OCI-LY7 (cell line): ENCODE measurements at regions of chr4 and their contacts with region 1.

Region 1: DNA sequence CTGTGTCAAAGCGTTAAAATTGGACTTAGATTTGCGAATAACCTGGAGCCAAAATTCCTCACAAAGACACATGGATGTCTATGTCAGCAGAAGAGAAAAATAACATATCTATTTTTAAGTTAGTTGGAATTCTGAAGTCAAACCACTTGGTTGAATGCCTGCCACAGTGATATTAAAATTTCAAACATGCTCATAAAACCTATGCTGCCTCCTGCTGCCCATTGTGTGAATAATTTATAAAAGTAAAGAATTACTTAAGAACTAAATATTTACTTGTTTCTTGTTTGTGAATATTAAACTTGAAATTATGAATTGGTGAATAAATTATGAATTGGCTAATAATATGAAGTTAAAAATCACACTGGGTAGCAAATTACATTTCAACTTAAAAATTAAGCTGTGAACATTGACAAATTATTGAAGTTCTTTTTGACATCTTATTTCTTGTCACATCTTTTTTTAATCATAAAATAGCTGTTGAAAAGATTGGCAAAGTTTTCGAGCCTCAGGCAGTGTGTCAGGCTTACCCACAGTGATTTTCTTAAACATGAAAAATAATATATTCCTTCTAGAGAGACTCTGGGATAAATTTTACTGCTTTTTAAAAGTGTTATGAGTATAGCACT is 35.4 kb downstream of the FABP2 start:
- DNase-seq: peak; percentile 57
- H3K4me3 ChIP-seq: no peak overlapping the region
- H3K27ac ChIP-seq: no peak overlapping the region
- H3K4me1 ChIP-seq: peaks cover 4% of the 10 kb centered on the region
- CTCF ChIP-seq: peak; percentile 87

Region 2: GRCh38 chr4:119041951-119042560 is 244.4 kb before region 1 on chr4:
- CTCF ChIA-PET with region 1: no interaction called
- POLR2A ChIA-PET with region 1: interaction called, 6 read pairs
- intact Hi-C with region 1: loop called (anchors 2 kb)
- DNase-seq: peak; percentile 81
- H3K4me3 ChIP-seq: no peak overlapping the region
- H3K27ac ChIP-seq: peak overlapping the region; percentile 6
- H3K4me1 ChIP-seq: peaks cover 22% of the 10 kb centered on the region
- CTCF ChIP-seq: peak; percentile 89

Region 3: GRCh38 chr4:119300101-119300978 is 13.8 kb after region 1 on chr4:
- CTCF ChIA-PET with region 1: no interaction called
- POLR2A ChIA-PET with region 1: interaction called, 16 read pairs
- intact Hi-C with region 1: no loop called
- DNase-seq: peak; percentile 93
- H3K4me3 ChIP-seq: peak overlapping the region; percentile 95
- H3K27ac ChIP-seq: peak overlapping the region; percentile 91
- H3K4me1 ChIP-seq: peaks cover 25% of the 10 kb centered on the region
- CTCF ChIP-seq: peak; percentile 39; the same call in 1 of the 2 replicates

Region 4: DNA sequence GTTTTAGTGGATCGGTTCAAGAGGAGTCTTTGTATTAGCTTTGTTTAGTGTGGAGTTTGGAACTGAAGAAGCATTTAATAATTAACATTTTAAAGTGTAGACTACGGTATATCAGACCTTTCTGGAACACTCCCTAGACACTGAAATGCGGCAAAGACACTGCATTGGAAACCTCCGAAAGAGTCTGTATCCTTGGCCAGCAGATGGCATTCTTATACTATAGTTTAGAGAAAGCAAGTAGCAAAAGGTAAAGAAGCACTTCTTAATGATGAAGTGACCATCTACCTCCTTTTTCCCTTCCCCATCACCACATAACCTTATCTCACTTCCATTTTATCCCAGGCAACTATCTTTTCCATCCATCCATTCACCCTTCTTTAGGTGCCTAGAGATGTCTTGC is 27.9 kb after region 1 on chr4:
- CTCF ChIA-PET with region 1: no interaction called
- POLR2A ChIA-PET with region 1: no interaction called
- intact Hi-C with region 1: no loop called
- DNase-seq: peak; percentile 57
- H3K4me3 ChIP-seq: no peak overlapping the region
- H3K27ac ChIP-seq: no peak overlapping the region
- H3K4me1 ChIP-seq: no peaks in the 10 kb centered on the region
- CTCF ChIP-seq: peak; percentile 78